GM12878 (cell line): ENCODE measurements at regions of chr4 and their contacts with region 1.

Region 1: GRCh38 chr4:20422398-20422797 is 170.7 kb downstream of the SLIT2 start:
- DNase-seq: no peak
- ATAC-seq: peak; percentile 79
- H3K4me3 ChIP-seq: no peak overlapping the region
- H3K27ac ChIP-seq: no peak overlapping the region
- H3K4me1 ChIP-seq: no peaks in the 10 kb centered on the region
- H3K27me3 ChIP-seq: no peaks in the 10 kb centered on the region
- CTCF ChIP-seq: peak; percentile 35 to 61 (median 37)
- EP300 ChIP-seq: no peak
- POLR2A ChIP-seq: no peak
- RAD21 ChIP-seq: peak; percentile 49

Region 2: DNA sequence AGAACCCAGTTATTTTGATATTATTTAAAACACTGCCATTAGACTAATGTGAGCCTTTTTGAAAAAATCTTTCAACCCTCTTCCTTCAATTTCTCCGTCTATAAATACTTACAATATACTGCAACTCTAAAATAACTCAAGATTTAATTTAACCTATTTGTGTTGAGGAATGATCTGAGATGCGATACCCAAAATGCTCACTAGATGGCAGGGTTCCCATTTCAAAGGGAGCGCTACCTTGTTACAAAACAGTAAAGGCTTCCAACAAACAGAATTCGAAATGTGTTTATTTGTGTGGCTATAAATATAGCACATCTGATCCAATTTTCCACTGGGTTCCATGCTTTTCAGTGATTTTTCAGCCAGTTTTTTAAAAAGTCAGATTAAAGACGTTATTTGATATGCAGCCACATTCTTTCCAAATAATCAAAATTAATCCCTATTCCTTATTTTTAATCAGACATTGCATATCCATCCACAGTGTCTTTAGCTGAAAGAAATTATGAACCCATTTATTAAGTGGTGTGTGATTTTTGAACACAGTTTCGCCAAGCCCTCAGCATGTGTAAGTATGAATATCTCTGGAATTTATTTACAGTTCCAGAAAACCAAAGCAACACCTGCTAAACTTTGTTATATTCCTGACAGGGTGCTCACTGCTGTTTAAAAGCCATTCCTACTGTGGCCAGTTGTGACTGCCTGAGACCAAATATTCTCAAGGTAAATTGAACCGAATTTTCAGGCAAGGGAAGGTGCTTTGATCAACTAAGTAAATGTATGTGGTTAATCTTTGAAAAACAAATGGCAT is 1732.9 kb before region 1 on chr4:
- CTCF ChIA-PET with region 1: no interaction called
- POLR2A ChIA-PET with region 1: no interaction called
- RAD21 ChIA-PET with region 1: no interaction called
- SMC1A ChIA-PET with region 1: interaction called, 3 read pairs
- in situ Hi-C with region 1: loop called (anchors 25 kb)
- intact Hi-C with region 1: loop called (anchors 10 kb)
- DNase-seq: no peak
- ATAC-seq: peak; percentile 63
- H3K4me3 ChIP-seq: no peak overlapping the region
- H3K27ac ChIP-seq: no peak overlapping the region
- H3K4me1 ChIP-seq: no peaks in the 10 kb centered on the region
- H3K27me3 ChIP-seq: no peaks in the 10 kb centered on the region
- CTCF ChIP-seq: peak; percentile 70 to 76 (median 74)
- EP300 ChIP-seq: no peak
- POLR2A ChIP-seq: no peak
- RAD21 ChIP-seq: peak; percentile 92

Region 3: DNA sequence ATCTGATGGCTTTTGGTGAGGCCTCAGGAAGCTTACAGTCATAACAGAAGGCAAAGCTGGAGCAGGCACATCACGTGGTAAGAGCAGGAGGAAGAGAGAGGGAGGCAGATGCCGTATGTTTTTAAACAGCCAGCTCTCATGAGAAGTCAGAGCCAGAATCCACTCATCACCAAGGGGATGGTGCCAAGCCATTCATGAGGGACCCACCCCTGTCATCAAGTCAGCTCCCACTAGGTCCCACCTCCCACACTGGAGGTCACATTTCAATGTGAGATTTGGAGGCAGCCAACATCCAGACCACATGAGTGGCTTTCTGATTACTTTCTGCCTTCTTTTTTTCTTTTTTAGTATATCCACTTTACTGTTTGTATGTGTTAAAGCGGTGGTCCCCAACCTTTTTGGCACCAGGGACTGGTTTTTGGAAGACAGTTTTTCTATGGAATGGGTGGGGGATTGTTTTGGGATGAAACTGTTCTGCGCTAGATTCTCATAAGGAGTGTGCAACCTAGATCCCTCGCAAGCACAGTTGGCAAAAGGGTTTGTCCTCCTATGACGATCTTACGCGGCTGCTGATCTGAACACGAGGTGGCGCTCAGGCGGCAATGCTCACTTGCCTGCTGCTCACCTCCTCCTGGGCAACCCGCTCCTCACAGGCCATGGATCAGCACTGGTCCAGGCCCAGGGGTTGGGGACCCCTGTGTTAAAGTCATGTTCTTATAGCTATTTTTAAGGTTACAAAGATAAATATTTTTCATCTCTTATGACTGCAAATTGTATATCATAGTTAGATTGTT is 109.0 kb before region 1 on chr4:
- CTCF ChIA-PET with region 1: no interaction called
- POLR2A ChIA-PET with region 1: no interaction called
- RAD21 ChIA-PET with region 1: no interaction called
- SMC1A ChIA-PET with region 1: interaction called, 3 read pairs
- in situ Hi-C with region 1: no loop called
- intact Hi-C with region 1: loop called (anchors 5 kb)
- DNase-seq: peak; percentile 1
- ATAC-seq: peak; percentile 80
- H3K4me3 ChIP-seq: no peak overlapping the region
- H3K27ac ChIP-seq: no peak overlapping the region
- H3K4me1 ChIP-seq: no peaks in the 10 kb centered on the region
- H3K27me3 ChIP-seq: no peaks in the 10 kb centered on the region
- CTCF ChIP-seq: peak; percentile 39 to 49 (median 39); a peak in 4 of 6 replicates
- EP300 ChIP-seq: no peak
- POLR2A ChIP-seq: no peak
- RAD21 ChIP-seq: peak; percentile 34

Region 4: DNA sequence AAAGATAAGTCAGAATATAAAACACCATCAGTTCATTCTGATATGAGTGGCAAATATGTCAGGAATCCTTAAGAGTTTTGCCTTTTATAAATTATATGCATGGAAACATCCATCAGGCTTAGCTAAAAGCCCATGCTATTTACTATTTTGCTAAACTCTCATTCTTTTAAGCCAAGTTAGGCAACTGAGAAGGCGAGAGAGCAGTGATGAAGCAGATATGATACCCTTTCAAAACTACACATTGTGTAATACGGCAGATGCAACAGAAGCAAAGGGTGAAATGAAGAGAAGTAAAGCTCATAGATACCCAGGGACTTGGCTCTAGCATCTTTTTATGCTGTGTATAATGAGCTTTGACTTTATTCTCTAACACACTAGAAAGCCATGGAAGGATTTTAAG is 74.9 kb before region 1 on chr4:
- CTCF ChIA-PET with region 1: no interaction called
- POLR2A ChIA-PET with region 1: no interaction called
- RAD21 ChIA-PET with region 1: no interaction called
- SMC1A ChIA-PET with region 1: no interaction called
- in situ Hi-C with region 1: no loop called
- intact Hi-C with region 1: no loop called
- DNase-seq: no peak
- ATAC-seq: no peak
- H3K4me3 ChIP-seq: no peak overlapping the region
- H3K27ac ChIP-seq: no peak overlapping the region
- H3K4me1 ChIP-seq: no peaks in the 10 kb centered on the region
- H3K27me3 ChIP-seq: no peaks in the 10 kb centered on the region
- CTCF ChIP-seq: no peak
- EP300 ChIP-seq: no peak
- POLR2A ChIP-seq: no peak
- RAD21 ChIP-seq: no peak

Region 5: GRCh38 chr4:20544645-20545044 is 122.2 kb after region 1 on chr4:
- CTCF ChIA-PET with region 1: no interaction called
- POLR2A ChIA-PET with region 1: no interaction called
- RAD21 ChIA-PET with region 1: no interaction called
- SMC1A ChIA-PET with region 1: no interaction called
- in situ Hi-C with region 1: no loop called
- intact Hi-C with region 1: loop called (anchors 1 kb)
- DNase-seq: no peak
- ATAC-seq: 0 out of 3 replicates have a peak, but pooled peaks have one; percentile 28
- H3K4me3 ChIP-seq: no peak overlapping the region
- H3K27ac ChIP-seq: no peak overlapping the region
- H3K4me1 ChIP-seq: no peaks in the 10 kb centered on the region
- H3K27me3 ChIP-seq: no peaks in the 10 kb centered on the region
- CTCF ChIP-seq: peak; percentile 15 to 32 (median 26); a peak in 4 of 6 replicates
- EP300 ChIP-seq: no peak
- POLR2A ChIP-seq: no peak
- RAD21 ChIP-seq: peak; percentile 56

Region 6: GRCh38 chr4:21765810-21766407 is 1343.5 kb after region 1 on chr4:
- CTCF ChIA-PET with region 1: no interaction called
- POLR2A ChIA-PET with region 1: no interaction called
- RAD21 ChIA-PET with region 1: no interaction called
- SMC1A ChIA-PET with region 1: no interaction called
- in situ Hi-C with region 1: loop called (anchors 25 kb)
- intact Hi-C with region 1: loop called (anchors 10 kb)
- DNase-seq: no peak
- ATAC-seq: peak; percentile 82
- H3K4me3 ChIP-seq: no peak overlapping the region
- H3K27ac ChIP-seq: no peak overlapping the region
- H3K4me1 ChIP-seq: no peaks in the 10 kb centered on the region
- H3K27me3 ChIP-seq: no peaks in the 10 kb centered on the region
- CTCF ChIP-seq: peak; percentile 78 to 91 (median 78)
- EP300 ChIP-seq: no peak
- POLR2A ChIP-seq: no peak
- RAD21 ChIP-seq: peak; percentile 62